ENCODE measurements at regions of chr9 and their contacts with region 1.

Region 1: DNA sequence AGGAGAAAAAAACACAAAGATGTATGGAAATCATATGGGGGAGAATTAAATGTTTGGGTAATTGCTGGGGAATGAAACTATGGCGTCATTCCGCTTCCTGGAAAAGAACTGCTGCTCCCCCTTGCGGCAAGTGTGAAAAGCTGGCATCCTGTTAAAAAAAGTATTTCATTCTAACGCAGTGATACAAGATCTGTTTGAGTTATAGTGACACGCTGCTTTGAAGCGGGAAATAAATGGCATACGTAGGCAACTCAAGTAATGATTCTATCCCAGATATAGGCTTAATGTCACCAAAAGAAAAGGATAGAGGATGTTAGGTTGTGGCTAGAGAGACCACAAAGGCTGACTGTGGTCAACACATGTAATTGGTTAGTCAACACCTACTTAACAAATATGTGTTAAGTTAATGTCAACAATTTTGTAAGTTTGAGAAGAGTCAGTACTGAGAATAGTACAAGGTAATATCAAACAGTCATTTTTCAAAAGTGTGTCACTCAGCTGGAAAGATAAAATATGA is 70.2 kb upstream of the ALDH1A1 start:
- DNase-seq: peak; percentile 60
- H3K4me3 Mint-ChIP-seq: no peak overlapping the region
- H3K27ac Mint-ChIP-seq: no peak overlapping the region
- H3K4me1 Mint-ChIP-seq: peaks cover 9% of the 10 kb centered on the region
- H3K27me3 Mint-ChIP-seq: peaks cover 10% of the 10 kb centered on the region

Region 2: DNA sequence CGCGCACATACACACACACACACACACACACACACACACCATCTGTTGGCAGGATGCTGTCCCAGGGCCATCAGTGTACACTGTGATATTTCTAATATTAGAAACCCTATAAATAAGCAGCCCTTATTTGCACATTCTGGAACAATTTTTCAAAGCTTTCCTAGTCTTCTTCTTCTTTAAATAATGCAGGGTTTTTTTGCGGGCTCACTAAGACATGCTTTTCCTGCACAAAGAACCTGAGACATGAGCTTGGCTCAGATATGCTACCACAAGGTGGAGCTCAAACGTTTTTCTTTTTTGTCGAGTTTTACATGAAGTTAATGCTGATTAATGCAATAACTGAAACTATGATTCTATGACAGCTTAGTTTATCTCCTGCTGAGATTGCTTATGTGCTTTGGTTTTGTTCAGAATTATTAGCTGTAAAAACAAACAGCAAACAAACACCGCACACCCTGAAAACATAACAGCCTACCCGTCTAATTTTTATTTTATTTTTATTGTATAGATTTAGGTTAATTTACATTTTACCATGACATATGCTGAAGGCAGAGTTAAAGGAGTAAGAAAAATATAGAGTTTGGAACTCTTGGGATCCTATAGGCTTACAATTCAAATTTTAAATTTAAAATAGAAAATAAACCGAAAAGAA is 166.0 kb before region 1 on chr9:
- CTCF ChIA-PET with region 1: interaction called, 22 read pairs
- POLR2A ChIA-PET with region 1: no interaction called
- intact Hi-C with region 1: loop called (anchors 5 kb)
- DNase-seq: no peak
- H3K4me3 Mint-ChIP-seq: no peak overlapping the region
- H3K27ac Mint-ChIP-seq: no peak overlapping the region
- H3K4me1 Mint-ChIP-seq: no peaks in the 10 kb centered on the region
- H3K27me3 Mint-ChIP-seq: no peaks in the 10 kb centered on the region

Region 3: GRCh38 chr9:72871685-72872084 is 151.4 kb before region 1 on chr9:
- CTCF ChIA-PET with region 1: interaction called, 8 read pairs
- POLR2A ChIA-PET with region 1: no interaction called
- intact Hi-C with region 1: loop called (anchors 2 kb)
- DNase-seq: no peak
- H3K4me3 Mint-ChIP-seq: no peak overlapping the region
- H3K27ac Mint-ChIP-seq: no peak overlapping the region
- H3K4me1 Mint-ChIP-seq: no peaks in the 10 kb centered on the region
- H3K27me3 Mint-ChIP-seq: peaks cover 6% of the 10 kb centered on the region

Region 4: DNA sequence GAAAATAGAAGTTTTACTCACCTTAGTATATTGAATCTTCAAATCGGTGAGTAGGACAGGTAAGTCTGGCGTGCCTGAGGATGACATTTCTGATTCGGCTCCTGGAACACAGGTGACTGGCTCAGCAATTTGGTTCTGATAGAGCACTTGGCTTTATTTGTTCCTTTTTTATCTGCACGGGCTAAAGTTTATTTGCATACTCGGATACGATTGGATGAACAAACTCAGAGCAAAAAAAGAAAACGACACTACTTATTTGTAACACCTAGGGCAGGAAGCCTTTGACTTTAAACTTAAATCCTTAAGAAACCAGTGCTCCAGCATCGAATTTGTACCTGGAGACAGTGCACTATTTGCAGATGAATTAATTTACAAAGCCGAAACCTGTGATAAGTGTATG is 70.2 kb before region 1 on chr9 and contains the start of gene ALDH1A1:
- CTCF ChIA-PET with region 1: no interaction called
- POLR2A ChIA-PET with region 1: no interaction called
- intact Hi-C with region 1: no loop called
- DNase-seq: no peak
- H3K4me3 Mint-ChIP-seq: no peak within 1 kb of the TSS
- H3K27ac Mint-ChIP-seq: no peak within 1 kb of the TSS
- H3K4me1 Mint-ChIP-seq: peaks cover 8% of the 10 kb centered on the region
- H3K27me3 Mint-ChIP-seq: peaks cover 16% of the 10 kb centered on the region
- total RNA-seq, gene ALDH1A1: not detected